ENCODE measurements at regions of chr3 and their contacts with region 1.

Region 1: DNA sequence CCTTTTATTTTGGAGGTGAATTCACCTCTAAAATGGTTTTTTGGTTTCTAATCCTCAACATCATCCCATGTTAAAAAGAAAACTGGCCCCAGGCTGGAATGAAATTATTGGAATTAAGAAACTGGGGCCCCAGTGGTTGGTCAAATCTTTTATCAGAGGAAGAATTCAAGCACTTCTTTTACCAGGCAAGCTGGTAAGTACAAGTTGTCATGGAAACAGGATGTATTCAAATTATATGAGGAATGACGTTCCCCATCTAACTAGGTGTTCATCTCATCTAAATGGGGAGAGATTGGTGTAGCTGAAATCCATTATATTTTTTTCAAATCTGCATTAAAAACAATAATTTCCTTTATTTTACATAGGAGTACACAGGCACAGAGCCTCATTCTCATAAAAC is 9.7 kb upstream of the EIF4E3 start:
- DNase-seq: no peak
- ATAC-seq: no peak
- H3K4me3 ChIP-seq: no peak overlapping the region
- H3K27ac ChIP-seq: no peak overlapping the region
- H3K4me1 ChIP-seq: no peaks in the 10 kb centered on the region
- H3K27me3 ChIP-seq: peaks cover 0 to 4% of the 10 kb centered on the region in 2 experiments; a peak in 2 of 4 replicates
- CTCF ChIP-seq: no peak
- EP300 ChIP-seq: no peak
- POLR2A ChIP-seq: no peak
- RAD21 ChIP-seq: no peak

Region 2: DNA sequence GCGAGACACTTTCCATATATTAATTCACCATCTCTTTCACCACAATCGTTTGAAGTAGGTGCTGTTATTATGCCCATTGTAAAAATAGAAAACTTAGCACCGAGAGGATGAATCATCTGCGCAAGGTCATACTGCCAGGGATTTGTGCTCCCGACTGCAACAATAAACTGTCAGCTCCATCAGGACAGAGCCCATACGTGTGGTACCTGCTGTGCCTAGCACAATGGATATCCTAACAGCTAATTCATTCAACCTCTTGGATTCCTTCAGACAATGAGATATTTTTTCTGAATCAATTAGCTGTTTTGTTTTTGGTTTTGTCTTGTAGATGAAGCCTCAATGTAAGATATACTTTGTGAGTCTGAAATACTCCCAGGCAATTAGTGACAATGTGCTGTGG is 82.4 kb after region 1 on chr3:
- CTCF ChIA-PET with region 1: no interaction called
- POLR2A ChIA-PET with region 1: no interaction called
- RAD21 ChIA-PET with region 1: no interaction called
- SMC1A ChIA-PET with region 1: no interaction called
- in situ Hi-C with region 1: no loop called
- intact Hi-C with region 1: no loop called
- DNase-seq: no peak
- ATAC-seq: no peak
- H3K4me3 ChIP-seq: no peak overlapping the region
- H3K27ac ChIP-seq: no peak overlapping the region
- H3K4me1 ChIP-seq: no peaks in the 10 kb centered on the region
- H3K27me3 ChIP-seq: no peaks in the 10 kb centered on the region
- CTCF ChIP-seq: no peak
- EP300 ChIP-seq: no peak
- POLR2A ChIP-seq: no peak
- RAD21 ChIP-seq: no peak

Region 3: GRCh38 chr3:72092778-72093177 is 357.9 kb after region 1 on chr3:
- CTCF ChIA-PET with region 1: no interaction called
- POLR2A ChIA-PET with region 1: no interaction called
- RAD21 ChIA-PET with region 1: no interaction called
- SMC1A ChIA-PET with region 1: no interaction called
- in situ Hi-C with region 1: no loop called
- intact Hi-C with region 1: loop called (anchors 10 kb)
- DNase-seq: no peak
- ATAC-seq: peak; percentile 56
- H3K4me3 ChIP-seq: no peak overlapping the region
- H3K27ac ChIP-seq: no peak overlapping the region; the same call in 1 of the 2 replicates
- H3K4me1 ChIP-seq: peaks cover 22% of the 10 kb centered on the region
- H3K27me3 ChIP-seq: no peaks in the 10 kb centered on the region
- CTCF ChIP-seq: peak; percentile 9 to 24 (median 12); a peak in 2 of 6 replicates
- EP300 ChIP-seq: no peak
- POLR2A ChIP-seq: no peak
- RAD21 ChIP-seq: 0 out of 2 replicates have a peak, but pooled peaks have one; percentile 5

Measured in GM12878 (cell line).